ENCODE measurements at regions of chr2 and their contacts with region 1.

Region 1: DNA sequence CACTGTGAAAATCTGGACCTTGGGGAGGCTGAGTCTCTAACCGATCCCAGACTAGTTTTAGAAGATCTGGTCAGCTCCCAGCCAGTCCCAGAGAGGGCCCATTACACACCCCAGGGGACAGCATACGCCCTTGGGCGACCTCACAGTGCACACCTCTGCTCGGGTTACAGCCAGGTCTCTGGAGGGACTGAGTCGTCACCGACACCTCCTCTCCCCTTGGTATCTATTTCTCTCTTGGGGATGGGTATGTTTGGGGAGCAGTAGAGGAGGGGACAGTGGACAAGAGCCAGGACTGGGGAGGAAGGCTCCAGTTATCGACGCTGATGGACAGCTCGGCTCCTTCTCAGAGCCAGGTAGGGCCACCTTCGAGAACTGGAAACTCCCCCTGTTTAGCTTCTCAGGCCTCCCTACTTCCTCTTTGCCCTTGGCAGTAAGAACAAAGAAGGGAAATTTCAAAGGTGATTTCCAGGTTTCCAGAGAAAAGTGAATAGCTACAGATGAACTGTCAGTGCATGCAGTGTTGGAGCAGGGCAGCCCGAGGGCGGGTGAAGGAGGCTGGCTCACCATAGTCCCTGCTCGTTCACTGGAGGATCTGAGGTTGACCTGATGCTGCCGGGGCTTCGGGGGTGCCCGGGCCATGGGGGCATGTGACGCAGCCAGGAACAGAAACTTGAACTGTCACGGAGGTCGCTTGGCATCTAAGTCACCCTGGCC is 4.4 kb upstream of the SEMA4C start:
- DNase-seq: peak; percentile 55 to 59
- H3K4me3 ChIP-seq: no peak overlapping the region
- H3K27ac ChIP-seq: peak overlapping the region; percentile 3; the same call in 1 of the 2 replicates
- H3K4me1 ChIP-seq: peaks cover 77% of the 10 kb centered on the region
- H3K27me3 ChIP-seq: no peaks in the 10 kb centered on the region
- CTCF ChIP-seq: no peak

Region 2: GRCh38 chr2:96832754-96833507 is 41.3 kb before region 1 on chr2:
- CTCF ChIA-PET with region 1: no interaction called
- POLR2A ChIA-PET with region 1: interaction called, 15 read pairs
- intact Hi-C with region 1: no loop called
- DNase-seq: peak; percentile 90 to 94
- H3K4me3 ChIP-seq: peak overlapping the region; percentile 30; the same call in 1 of the 2 replicates
- H3K27ac ChIP-seq: peak overlapping the region; percentile 86
- H3K4me1 ChIP-seq: peaks cover 25% of the 10 kb centered on the region
- H3K27me3 ChIP-seq: no peaks in the 10 kb centered on the region
- CTCF ChIP-seq: no peak

Region 3: DNA sequence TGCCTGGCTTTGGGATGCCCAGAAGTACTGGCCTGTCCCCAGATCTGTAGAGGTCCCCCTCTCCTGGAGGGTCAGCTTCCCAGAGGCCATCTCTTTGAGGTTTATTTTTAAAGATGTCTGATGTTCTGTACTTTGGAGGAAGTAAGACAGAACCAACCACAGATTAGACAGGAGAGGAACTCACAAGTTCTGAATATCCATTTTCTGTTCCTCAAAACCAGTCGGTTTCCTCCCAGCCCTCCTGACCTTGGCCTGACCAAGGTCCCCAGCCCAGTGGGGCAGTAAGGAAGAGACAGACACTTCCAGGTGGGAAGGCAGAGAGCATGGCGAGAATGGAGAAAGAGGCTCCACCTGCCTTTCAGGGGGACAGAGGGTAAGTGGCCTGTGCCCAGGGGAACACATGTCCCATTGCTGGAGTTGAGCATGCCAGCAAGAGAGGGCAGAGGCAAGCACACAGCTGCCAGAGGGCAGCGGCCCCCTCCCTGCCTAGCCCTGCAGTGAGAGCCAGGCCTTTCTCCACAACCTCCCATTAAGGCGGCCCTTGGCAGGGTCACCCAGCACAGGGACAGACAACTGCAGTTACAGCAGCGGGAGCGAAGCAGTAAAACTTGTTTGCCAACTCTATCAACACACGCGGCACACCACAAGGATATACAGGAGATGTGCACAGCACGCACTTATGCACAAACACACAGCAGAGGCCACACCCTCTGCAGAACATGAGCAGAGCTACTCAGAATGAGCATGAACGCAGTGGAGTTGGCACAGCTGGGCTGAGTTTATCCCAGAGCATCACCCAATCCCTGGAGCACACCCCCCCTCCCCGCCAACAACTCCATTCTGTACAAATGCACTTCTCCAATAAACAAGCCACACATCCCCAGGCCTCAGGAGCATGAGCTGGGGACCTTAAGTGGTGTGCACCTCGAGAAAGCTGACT is 14.1 kb after region 1 on chr2:
- CTCF ChIA-PET with region 1: interaction called, 3 read pairs
- POLR2A ChIA-PET with region 1: interaction called, 11 read pairs
- intact Hi-C with region 1: loop called (anchors 1 kb)
- DNase-seq: peak; percentile 89 to 98
- H3K4me3 ChIP-seq: peak overlapping the region; percentile 29; the same call in 1 of the 2 replicates
- H3K27ac ChIP-seq: peak overlapping the region; percentile 69
- H3K4me1 ChIP-seq: peaks cover 71% of the 10 kb centered on the region
- H3K27me3 ChIP-seq: no peaks in the 10 kb centered on the region
- CTCF ChIP-seq: no peak

Region 4: DNA sequence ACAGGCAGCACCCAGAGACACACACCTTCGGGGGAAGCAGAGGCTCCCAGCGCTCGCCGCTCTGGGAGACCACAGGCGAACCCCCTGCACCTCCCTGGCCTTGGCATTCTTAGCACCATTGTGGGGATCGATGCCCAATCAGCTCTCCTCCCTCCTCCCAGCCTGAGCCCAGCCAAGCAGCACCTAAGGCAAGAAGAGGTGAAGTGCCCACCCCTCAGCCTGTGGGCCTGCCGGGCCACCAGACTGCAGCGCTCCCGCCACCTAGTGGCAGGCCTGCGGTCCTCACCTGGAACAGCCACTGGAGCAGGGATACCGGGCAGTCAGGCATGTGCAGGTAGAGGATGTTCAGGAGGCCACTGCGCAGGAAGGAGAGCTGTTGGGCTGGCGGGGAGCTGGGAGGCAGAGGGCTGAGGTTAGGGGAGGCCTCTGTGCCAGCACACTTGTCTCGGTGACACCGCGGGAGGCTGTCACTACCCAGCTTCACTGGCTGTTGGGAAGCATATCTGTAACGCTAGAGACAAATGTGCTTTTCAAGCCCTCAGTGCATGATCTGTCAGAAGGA is 76.9 kb after region 1 on chr2:
- CTCF ChIA-PET with region 1: interaction called, 3 read pairs
- POLR2A ChIA-PET with region 1: interaction called, 28 read pairs
- intact Hi-C with region 1: no loop called
- DNase-seq: peak; percentile 57 to 88
- H3K4me3 ChIP-seq: no peak overlapping the region
- H3K27ac ChIP-seq: no peak overlapping the region
- H3K4me1 ChIP-seq: no peaks in the 10 kb centered on the region
- H3K27me3 ChIP-seq: no peaks in the 10 kb centered on the region
- CTCF ChIP-seq: peak; percentile 99